Heart left ventricle (tissue), 16 donors: ENCODE measurements at regions of chr5 and their contacts with region 1.

Region 1: DNA sequence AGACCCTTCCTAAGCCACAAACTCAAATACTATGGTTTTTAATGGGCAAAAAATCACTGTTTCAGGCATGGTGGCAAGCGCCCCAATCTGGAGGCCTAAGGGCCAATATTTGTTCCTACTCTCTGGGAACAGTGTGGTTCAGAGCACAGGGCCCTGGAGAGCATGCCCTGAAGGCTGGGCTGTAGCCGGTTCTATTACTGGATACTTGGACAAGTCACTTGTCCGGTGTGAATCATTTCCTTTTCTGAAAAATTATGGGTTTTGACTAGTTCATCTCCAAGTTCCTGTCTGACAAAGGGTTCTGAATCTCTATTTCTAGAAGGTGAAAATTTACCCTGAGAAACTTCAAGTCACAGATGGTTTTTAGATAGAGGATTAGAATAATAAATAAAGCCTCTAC is 75.0 kb downstream of the OTULIN start:
- DNase-seq: peak in 1 of 5 donors; percentile 60
- ATAC-seq: peak; percentile 38 to 72 (median 56)
- H3K4me3 ChIP-seq: no peak overlapping the region
- H3K27ac ChIP-seq: peak overlapping the region in 8 of 12 donors; percentile 27 to 78 (median 62)
- H3K4me1 ChIP-seq: peaks cover 0 to 59% (median 27%) of the 10 kb centered on the region in 12 donors
- H3K27me3 ChIP-seq: no peaks in the 10 kb centered on the region
- CTCF ChIP-seq: no peak
- POLR2A ChIP-seq: no peak

Region 2: GRCh38 chr5:14849516-14850294 is 110.2 kb after region 1 on chr5:
- intact Hi-C with region 1: loop called in 1 of 10 experiments (anchors 10 kb)
- DNase-seq: no peak
- ATAC-seq: no peak
- H3K4me3 ChIP-seq: no peak overlapping the region
- H3K27ac ChIP-seq: no peak overlapping the region
- H3K4me1 ChIP-seq: peaks cover 3 to 53% (median 22%) of the 10 kb centered on the region in 12 donors
- H3K27me3 ChIP-seq: no peaks in the 10 kb centered on the region
- CTCF ChIP-seq: no peak
- POLR2A ChIP-seq: no peak